Activated CD8-positive, alpha-beta T cell treated with anti-CD3 and anti-CD28 coated beads for 36 hours (primary cell): ENCODE measurements at regions of chr11 and their contacts with region 1.

Region 1: GRCh38 chr11:34357701-34358257 is at the start of gene ABTB2:
- DNase-seq: peak; percentile 99
- ATAC-seq: peak; percentile 92
- H3K4me3 Mint-ChIP-seq: peak within 1 kb of the TSS; percentile 76
- H3K27ac Mint-ChIP-seq: peak within 1 kb of the TSS; percentile 77
- H3K4me1 Mint-ChIP-seq: peaks cover 28% of the 10 kb centered on the region
- H3K27me3 Mint-ChIP-seq: peaks cover 35% of the 10 kb centered on the region
- CTCF ChIP-seq: no peak
- total RNA-seq, gene ABTB2: 2.4 to 2.5 TPM

Region 2: DNA sequence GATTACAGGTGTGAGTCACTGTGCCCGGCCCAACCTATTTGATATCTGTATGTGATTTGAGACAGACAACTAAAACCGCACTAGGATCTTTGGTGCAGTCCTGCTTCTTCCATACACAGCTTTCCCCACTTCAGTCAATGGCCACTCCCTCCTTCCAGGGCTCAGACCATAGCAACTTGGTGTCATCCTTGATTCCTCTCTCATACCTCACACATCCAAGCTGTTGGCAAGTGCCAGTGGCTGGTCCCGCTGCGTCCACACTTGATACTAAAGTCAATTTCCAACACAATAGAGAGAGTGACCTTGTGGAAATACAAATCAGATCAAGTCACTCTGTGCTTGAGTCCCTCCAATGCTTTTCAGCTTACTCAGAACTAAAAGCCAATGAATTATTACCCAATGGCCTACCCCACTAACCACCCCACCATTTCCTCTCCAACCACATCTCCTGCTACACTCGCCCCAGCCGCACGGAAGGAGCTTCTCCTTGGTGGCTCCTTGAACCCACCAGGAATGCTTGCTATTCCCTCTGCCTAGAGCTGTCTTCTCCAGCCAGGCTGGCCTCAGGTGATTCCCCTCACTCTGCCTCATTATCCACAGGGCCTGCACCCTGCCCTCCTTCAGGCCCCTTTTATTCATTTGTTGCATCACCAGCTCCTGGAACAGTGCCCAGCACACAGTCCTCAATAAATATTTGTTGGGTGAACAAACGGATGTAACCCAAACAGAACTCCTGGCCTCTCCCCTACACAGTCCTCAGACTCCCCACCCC is 12.8 kb before region 1 on chr11:
- CTCF ChIA-PET with region 1: interaction called, 19 read pairs
- POLR2A ChIA-PET with region 1: interaction called, 3 read pairs
- intact Hi-C with region 1: no loop called
- DNase-seq: no peak
- ATAC-seq: no peak
- H3K4me3 Mint-ChIP-seq: no peak overlapping the region
- H3K27ac Mint-ChIP-seq: no peak overlapping the region
- H3K4me1 Mint-ChIP-seq: no peaks in the 10 kb centered on the region
- H3K27me3 Mint-ChIP-seq: no peaks in the 10 kb centered on the region
- CTCF ChIP-seq: no peak

Region 3: GRCh38 chr11:34444428-34444827 is 86.6 kb after region 1 on chr11:
- CTCF ChIA-PET with region 1: no interaction called
- POLR2A ChIA-PET with region 1: no interaction called
- intact Hi-C with region 1: no loop called
- DNase-seq: no peak
- ATAC-seq: no peak
- H3K4me3 Mint-ChIP-seq: no peak overlapping the region
- H3K27ac Mint-ChIP-seq: no peak overlapping the region
- H3K4me1 Mint-ChIP-seq: peaks cover 48% of the 10 kb centered on the region
- H3K27me3 Mint-ChIP-seq: no peaks in the 10 kb centered on the region
- CTCF ChIP-seq: no peak